Panc1 (cell line): ENCODE measurements at regions of chr22 and their contacts with region 1.

Region 1: DNA sequence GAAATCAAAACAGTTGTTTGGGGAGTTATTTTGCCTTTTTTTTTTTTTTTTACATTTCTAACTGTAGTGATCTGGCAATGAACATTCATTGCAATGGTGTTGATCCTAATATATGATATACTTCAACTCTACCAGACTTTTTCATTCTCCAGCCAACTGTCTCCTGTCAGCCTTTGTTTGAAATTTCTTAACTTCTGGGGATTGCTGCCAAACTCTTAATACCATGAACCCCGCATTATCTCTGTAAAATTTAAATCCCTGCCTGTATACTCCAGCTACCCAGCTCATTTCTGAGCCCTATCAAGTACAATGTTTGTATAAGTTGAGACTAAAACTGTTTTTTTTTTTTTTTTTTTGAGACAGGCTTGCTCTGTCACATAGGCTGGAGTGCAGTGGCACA is 280.7 kb downstream of the TTC28 start:
- DNase-seq: no peak
- ATAC-seq: no peak
- H3K4me3 ChIP-seq: no peak overlapping the region
- H3K27ac ChIP-seq: no peak overlapping the region
- H3K4me1 ChIP-seq: no peaks in the 10 kb centered on the region
- H3K27me3 ChIP-seq: no peaks in the 10 kb centered on the region
- CTCF ChIP-seq: no peak

Region 2: DNA sequence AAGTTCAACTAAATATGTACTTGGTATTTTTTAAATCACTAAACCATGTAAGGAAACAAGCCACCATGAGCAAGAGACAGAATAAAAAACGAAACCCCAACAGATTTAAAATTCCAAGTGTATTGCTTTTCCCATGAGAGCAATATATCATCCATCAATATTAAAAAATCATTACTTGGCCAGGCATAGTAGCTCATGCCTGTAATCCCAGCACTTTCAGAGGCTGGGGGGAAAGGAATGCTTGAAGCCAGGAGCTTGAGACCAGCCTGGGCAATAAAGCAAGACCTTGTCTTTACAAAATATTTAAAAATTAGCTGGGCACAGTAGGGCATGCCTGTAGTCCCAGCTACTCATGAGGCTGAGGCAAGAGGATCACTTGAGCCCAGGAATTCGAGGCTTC is 89.8 kb after region 1 on chr22:
- CTCF ChIA-PET with region 1: no interaction called
- POLR2A ChIA-PET with region 1: interaction called, 12 read pairs
- in situ Hi-C with region 1: no loop called
- intact Hi-C with region 1: no loop called
- DNase-seq: no peak
- ATAC-seq: no peak
- H3K4me3 ChIP-seq: no peak overlapping the region
- H3K27ac ChIP-seq: no peak overlapping the region
- H3K4me1 ChIP-seq: no peaks in the 10 kb centered on the region
- H3K27me3 ChIP-seq: no peaks in the 10 kb centered on the region
- CTCF ChIP-seq: no peak